Mammary epithelial cell (primary cell): ENCODE measurements at regions of chr1 and their contacts with region 1.

Region 1: DNA sequence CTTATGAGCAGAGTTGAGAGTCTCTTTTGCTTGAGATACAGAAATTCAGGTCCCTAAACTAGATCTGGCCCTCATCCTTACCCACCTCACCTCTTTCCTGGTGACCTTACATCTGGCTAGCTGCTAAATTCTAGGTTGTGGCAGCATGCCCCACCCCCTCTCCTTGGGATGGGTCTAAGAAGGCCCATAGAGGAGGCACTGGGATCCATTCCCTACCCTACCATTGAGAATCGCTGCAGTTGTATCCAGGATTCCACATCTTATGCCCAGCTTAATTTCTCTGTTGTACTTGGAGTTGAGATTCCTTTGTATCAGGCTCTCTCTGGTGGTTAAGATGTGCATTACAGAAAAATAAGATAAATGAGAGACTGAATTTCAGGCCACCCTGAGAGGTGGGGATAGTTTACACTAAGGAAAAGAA is 9.5 kb upstream of the TMEM39B start:
- DNase-seq: peak; percentile 38
- H3K4me3 ChIP-seq: no peak overlapping the region
- H3K27ac ChIP-seq: no peak overlapping the region
- H3K4me1 ChIP-seq: peaks cover 23% of the 10 kb centered on the region
- H3K27me3 ChIP-seq: no peaks in the 10 kb centered on the region
- CTCF ChIP-seq: peak; percentile 54 to 59

Region 2: GRCh38 chr1:31977385-31978131 is 85.7 kb before region 1 on chr1:
- CTCF ChIA-PET with region 1: interaction called, 6 read pairs
- dilution Hi-C with region 1: no loop called
- in situ Hi-C with region 1: no loop called
- intact Hi-C with region 1: loop called (anchors 5 kb)
- DNase-seq: peak; percentile 39
- H3K4me3 ChIP-seq: no peak overlapping the region
- H3K27ac ChIP-seq: no peak overlapping the region
- H3K4me1 ChIP-seq: peaks cover 3% of the 10 kb centered on the region
- H3K27me3 ChIP-seq: no peaks in the 10 kb centered on the region
- CTCF ChIP-seq: peak; percentile 23 to 51

Region 3: GRCh38 chr1:32100807-32101697 is 37.8 kb after region 1 on chr1:
- CTCF ChIA-PET with region 1: no interaction called
- dilution Hi-C with region 1: no loop called
- in situ Hi-C with region 1: no loop called
- intact Hi-C with region 1: no loop called
- DNase-seq: no peak
- H3K4me3 ChIP-seq: no peak overlapping the region
- H3K27ac ChIP-seq: no peak overlapping the region
- H3K4me1 ChIP-seq: peaks cover 10% of the 10 kb centered on the region
- H3K27me3 ChIP-seq: no peaks in the 10 kb centered on the region
- CTCF ChIP-seq: no peak